ENCODE measurements at regions of chr9 and their contacts with region 1.

Region 1: GRCh38 chr9:113682297-113682771 is 193.8 kb upstream of the ZNF618 start:
- DNase-seq: peak; percentile 60 to 72 (median 68)
- ATAC-seq: peak; percentile 69
- H3K4me3 ChIP-seq: no peak overlapping the region
- H3K27ac ChIP-seq: no peak overlapping the region
- H3K4me1 ChIP-seq: no peaks in the 10 kb centered on the region
- H3K27me3 ChIP-seq: peaks cover under 1 to 39% of the 10 kb centered on the region in 2 experiments; a peak in 3 of 5 replicates
- CTCF ChIP-seq: peak; percentile 74 to 92 (median 84)
- EP300 ChIP-seq: no peak
- POLR2A ChIP-seq: no peak
- RAD21 ChIP-seq: peak; percentile 60 to 73

Region 2: DNA sequence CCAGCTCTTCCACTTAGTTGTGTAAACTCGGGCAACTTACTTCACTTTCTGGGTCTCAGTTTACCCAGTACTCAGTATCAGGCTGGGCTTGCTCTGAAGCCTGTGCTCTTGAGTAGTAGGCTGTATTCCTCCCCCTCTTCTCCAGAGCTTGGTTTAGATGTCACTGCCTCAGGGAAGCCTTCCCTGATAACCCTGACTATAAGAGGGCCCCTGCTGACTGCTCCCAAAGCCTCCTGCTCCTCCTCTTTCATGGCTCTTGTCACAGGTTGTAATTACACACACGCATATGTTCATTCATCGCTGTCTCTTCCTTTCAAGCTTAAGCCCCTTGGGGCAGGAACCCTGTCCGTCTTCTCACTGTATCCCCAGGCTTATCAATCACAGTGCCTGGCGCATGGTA is 78.6 kb before region 1 on chr9:
- CTCF ChIA-PET with region 1: no interaction called
- POLR2A ChIA-PET with region 1: no interaction called
- in situ Hi-C with region 1: no loop called
- intact Hi-C with region 1: no loop called
- DNase-seq: no peak
- ATAC-seq: no peak
- H3K4me3 ChIP-seq: no peak overlapping the region
- H3K27ac ChIP-seq: no peak overlapping the region
- H3K4me1 ChIP-seq: peaks cover 9 to 10% of the 10 kb centered on the region in 2 experiments
- H3K27me3 ChIP-seq: peaks cover 9 to 13% of the 10 kb centered on the region in 2 experiments; a peak in 2 of 5 replicates
- CTCF ChIP-seq: no peak
- EP300 ChIP-seq: no peak
- POLR2A ChIP-seq: no peak
- RAD21 ChIP-seq: no peak

Region 3: GRCh38 chr9:113695901-113696300 is 13.6 kb after region 1 on chr9:
- CTCF ChIA-PET with region 1: no interaction called
- POLR2A ChIA-PET with region 1: no interaction called
- in situ Hi-C with region 1: no loop called
- intact Hi-C with region 1: no loop called
- DNase-seq: no peak
- ATAC-seq: no peak
- H3K4me3 ChIP-seq: no peak overlapping the region
- H3K27ac ChIP-seq: no peak overlapping the region
- H3K4me1 ChIP-seq: no peaks in the 10 kb centered on the region; a peak in 1 of 5 replicates
- H3K27me3 ChIP-seq: peaks cover 4 to 23% of the 10 kb centered on the region in 2 experiments; a peak in 3 of 5 replicates
- CTCF ChIP-seq: no peak
- EP300 ChIP-seq: no peak
- POLR2A ChIP-seq: no peak
- RAD21 ChIP-seq: no peak

Region 4: DNA sequence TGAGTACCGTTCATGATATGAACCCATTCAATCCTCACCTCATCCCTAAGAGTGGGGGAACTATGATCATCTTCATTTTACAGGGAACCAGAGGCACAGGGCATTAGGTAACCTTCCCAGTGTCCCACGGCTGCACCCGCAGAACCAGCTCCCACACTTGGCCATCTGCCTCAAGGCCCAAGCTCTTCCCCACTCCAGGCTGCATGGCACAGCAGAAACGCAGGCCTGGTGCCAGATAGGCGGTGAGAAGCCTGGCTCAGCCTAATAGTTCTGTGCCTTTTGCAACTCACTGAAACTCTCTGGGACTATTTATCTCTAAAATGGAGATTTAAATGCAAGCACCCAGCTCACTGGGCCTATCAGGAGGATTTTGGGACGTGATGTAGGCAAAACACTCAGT is 103.0 kb after region 1 on chr9:
- CTCF ChIA-PET with region 1: no interaction called
- POLR2A ChIA-PET with region 1: no interaction called
- in situ Hi-C with region 1: no loop called
- intact Hi-C with region 1: no loop called
- DNase-seq: no peak
- ATAC-seq: no peak
- H3K4me3 ChIP-seq: no peak overlapping the region
- H3K27ac ChIP-seq: no peak overlapping the region
- H3K4me1 ChIP-seq: no peaks in the 10 kb centered on the region
- H3K27me3 ChIP-seq: peaks cover 6 to 26% of the 10 kb centered on the region in 2 experiments; a peak in 4 of 5 replicates
- CTCF ChIP-seq: no peak
- EP300 ChIP-seq: no peak
- POLR2A ChIP-seq: no peak
- RAD21 ChIP-seq: no peak

Region 5: DNA sequence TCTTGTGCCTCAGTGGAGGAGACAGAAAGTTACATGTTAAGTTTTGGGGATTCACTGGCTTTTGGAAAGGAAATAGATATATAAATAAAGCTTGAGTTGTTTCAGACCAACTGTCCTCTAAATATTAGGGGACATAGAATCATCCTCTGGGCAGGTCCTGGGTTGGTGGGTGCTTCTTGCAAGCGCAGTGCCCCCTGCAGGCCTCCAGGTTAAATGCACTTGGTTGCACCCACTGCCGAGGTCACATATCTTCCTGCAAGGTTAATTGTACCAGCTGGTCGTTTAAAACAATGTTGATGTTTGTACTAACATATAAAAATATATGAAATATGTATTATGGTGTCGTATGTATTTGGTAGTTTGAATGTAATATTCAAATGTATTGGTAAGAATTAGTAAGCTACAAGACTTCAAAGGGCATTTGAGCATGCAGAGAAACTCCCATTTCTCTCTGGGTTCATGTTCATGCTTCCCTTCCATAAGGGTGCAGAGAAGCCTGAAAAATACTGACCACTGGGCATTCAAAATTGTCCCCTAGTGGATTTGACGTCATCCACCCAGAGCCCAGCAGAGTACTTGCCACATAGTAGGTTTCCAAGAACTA is 280.8 kb after region 1 on chr9:
- CTCF ChIA-PET with region 1: no interaction called
- POLR2A ChIA-PET with region 1: no interaction called
- in situ Hi-C with region 1: no loop called
- intact Hi-C with region 1: loop called (anchors 10 kb)
- DNase-seq: peak; percentile 61 to 78 (median 74)
- ATAC-seq: peak; percentile 96
- H3K4me3 ChIP-seq: no peak overlapping the region
- H3K27ac ChIP-seq: no peak overlapping the region
- H3K4me1 ChIP-seq: no peaks in the 10 kb centered on the region
- H3K27me3 ChIP-seq: no peaks in the 10 kb centered on the region
- CTCF ChIP-seq: peak; percentile 72 to 85 (median 85)
- EP300 ChIP-seq: no peak
- POLR2A ChIP-seq: no peak
- RAD21 ChIP-seq: peak; percentile 46 to 59; a peak in 3 of 4 replicates

Region 6: GRCh38 chr9:114282926-114283325 is 600.6 kb after region 1 on chr9:
- CTCF ChIA-PET with region 1: no interaction called
- POLR2A ChIA-PET with region 1: no interaction called
- in situ Hi-C with region 1: loop called (anchors 10 kb)
- intact Hi-C with region 1: no loop called
- DNase-seq: no peak
- ATAC-seq: peak; percentile 66
- H3K4me3 ChIP-seq: no peak overlapping the region
- H3K27ac ChIP-seq: no peak overlapping the region
- H3K4me1 ChIP-seq: peaks cover 0 to 4% of the 10 kb centered on the region in 2 experiments; a peak in 2 of 5 replicates
- H3K27me3 ChIP-seq: peaks cover 15 to 64% of the 10 kb centered on the region in 2 experiments
- CTCF ChIP-seq: no peak
- EP300 ChIP-seq: no peak
- POLR2A ChIP-seq: no peak
- RAD21 ChIP-seq: no peak

Measured in K562 (cell line).